ENCODE measurements at regions of chr9 and their contacts with region 1.

Region 1: GRCh38 chr9:88578121-88579054 is 43.4 kb downstream of the NXNL2 start:
- DNase-seq: peak; percentile 65 to 98 (median 88)

Region 2: GRCh38 chr9:88076286-88077090 is 501.9 kb before region 1 on chr9:
- intact Hi-C with region 1: loop called (anchors 1 kb)
- DNase-seq: peak; percentile 39 to 95 (median 72)

Region 3: GRCh38 chr9:88106491-88106890 is 471.9 kb before region 1 on chr9:
- intact Hi-C with region 1: loop called (anchors 10 kb)
- DNase-seq: peak in 2 of 10 donors; percentile 13 to 41

Region 4: GRCh38 chr9:88173378-88173999 is 404.9 kb before region 1 on chr9:
- intact Hi-C with region 1: loop called (anchors 10 kb)
- DNase-seq: no peak

Region 5: DNA sequence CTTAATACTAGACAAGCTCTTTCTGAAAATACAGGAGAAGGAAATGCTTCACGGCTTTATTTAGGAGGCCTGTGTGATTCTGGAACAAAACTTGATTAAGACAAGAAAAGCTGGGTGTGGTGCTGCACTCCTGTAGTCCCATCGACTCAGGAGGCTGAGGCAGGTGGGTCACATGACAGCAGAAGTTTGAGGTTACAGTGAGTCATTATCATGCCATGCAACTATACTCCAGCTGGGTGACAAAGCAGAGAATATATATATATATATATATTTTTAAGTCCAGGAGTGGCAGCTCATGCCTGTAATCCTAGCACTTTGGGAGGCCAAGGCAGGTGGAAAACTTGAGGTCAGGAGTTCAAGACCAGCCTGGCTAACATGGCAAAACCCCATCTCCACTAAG is 223.2 kb before region 1 on chr9:
- intact Hi-C with region 1: no loop called
- DNase-seq: no peak

Region 6: DNA sequence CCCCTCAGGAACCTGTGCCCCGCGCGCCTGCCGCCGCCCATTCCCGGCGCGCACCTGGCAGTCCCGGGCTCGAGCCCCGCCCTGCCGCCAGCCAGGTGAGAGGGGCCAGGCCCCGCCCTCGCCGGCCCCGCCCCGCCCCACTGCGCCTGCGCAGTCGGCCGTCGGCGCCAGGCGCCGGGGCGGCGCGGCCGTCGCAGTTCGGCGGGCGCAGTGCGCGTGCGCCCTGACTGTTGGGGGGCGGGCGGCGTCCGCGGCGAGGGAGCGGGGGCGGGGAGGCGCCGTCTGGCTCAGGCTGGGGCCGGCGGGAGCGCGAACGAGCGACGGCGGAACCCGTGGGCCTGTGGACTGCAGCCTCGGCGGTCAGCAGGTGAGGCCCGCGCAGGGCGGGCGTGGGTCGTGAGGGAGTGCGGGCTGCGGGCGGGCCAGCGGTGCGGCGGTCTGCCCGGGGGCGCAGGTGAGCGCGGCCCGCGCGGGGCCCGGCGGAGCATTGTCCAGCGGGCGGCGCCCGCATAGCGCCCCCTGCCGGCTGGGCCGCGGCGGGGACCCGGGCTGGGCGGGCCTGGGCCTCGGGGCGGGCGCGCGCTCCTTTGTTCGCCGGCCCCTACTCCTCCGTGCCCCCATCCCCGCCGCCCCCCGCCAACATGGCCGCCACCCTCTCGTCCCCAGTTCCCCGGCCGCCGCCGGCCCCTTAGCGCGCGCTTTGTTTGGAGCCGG is 190.1 kb before region 1 on chr9 and contains the start of gene SPIN1:
- intact Hi-C with region 1: loop called (anchors 2 kb)
- DNase-seq: peak; percentile 47 to 94 (median 63)

Region 7: DNA sequence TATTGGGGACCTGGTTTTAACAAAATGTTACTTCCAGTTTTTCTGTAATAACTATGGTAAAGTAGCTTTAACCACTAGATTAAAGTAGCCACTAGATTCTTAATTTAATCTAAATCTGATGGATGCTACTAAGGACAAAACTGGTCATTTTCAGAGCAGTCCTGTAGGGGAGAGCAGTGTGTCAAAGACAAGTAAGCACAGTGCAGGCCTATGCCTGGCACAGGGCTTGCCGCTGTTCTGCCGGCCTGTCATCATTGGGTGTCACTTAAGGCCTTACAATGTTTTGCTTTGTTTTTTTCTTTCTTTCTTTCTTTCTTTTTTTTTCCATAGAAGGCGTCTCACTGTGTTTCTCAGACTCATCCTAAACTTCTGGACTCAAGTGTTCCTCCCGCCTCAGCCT is 96.5 kb before region 1 on chr9:
- intact Hi-C with region 1: loop called (anchors 5 kb)
- DNase-seq: peak in 7 of 10 donors; percentile 24 to 93 (median 46)

Region 8: GRCh38 chr9:88628114-88628513 is 49.7 kb after region 1 on chr9:
- intact Hi-C with region 1: no loop called
- DNase-seq: no peak

Measured in posterior cingulate gyrus (tissue), 11 donors.